ENCODE measurements at regions of chr22 and their contacts with region 1.

Region 1: GRCh38 chr22:21666786-21667185 is 974 bp downstream of the PPIL2 start:
- DNase-seq: no peak
- H3K4me3 ChIP-seq: peak overlapping the region; percentile 67 to 94
- H3K27ac ChIP-seq: peak overlapping the region; percentile 83 to 97
- H3K4me1 ChIP-seq: peaks cover 0 to 4% of the 10 kb centered on the region in 2 donors
- H3K27me3 ChIP-seq: no peaks in the 10 kb centered on the region
- CTCF ChIP-seq: no peak

Region 2: DNA sequence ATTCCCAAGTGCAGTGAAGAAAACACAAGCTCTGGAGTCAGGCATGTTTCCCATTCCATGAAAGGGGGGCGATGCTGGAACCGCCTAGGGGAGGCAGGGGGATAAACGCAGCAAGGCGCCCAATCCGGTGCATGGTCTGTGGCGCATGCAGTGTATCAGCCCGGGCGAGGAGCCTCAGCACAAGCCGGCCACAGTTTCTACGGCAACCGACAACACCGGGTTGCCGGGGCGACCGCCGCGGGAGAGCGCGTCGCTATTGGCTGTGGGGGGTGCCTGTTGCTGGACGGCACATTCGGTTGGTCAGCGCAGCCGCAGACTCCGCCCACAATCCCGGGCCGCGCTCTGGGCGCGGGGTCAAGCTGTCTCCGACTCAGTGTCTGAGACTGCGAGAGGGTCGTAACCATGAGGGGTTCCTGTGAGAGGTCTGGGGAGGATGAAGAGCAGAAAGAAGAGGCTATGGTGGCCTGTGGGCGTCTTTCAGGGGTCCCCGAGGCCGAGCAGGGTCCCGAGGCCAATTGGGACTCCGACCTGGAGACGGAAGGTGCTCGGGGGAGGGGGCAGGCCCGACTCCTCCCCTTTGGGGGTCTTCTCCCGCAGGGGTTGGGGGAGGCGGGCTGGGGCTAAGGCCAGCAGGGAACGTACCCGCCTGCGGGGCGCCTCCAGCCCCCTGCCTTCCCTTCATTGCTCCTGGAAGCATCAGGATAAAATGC is 621.0 kb before region 1 on chr22 and contains the start of gene LRRC74B:
- intact Hi-C with region 1: loop called (anchors 10 kb)
- DNase-seq: peak; percentile 62 to 89
- H3K4me3 ChIP-seq: peak within 1 kb of the TSS; percentile 37 to 41
- H3K27ac ChIP-seq: no peak within 1 kb of the TSS
- H3K4me1 ChIP-seq: peaks cover 7 to 15% of the 10 kb centered on the region in 2 donors
- H3K27me3 ChIP-seq: no peaks in the 10 kb centered on the region
- CTCF ChIP-seq: no peak
- total RNA-seq, gene LRRC74B: 2.6 TPM

Region 3: DNA sequence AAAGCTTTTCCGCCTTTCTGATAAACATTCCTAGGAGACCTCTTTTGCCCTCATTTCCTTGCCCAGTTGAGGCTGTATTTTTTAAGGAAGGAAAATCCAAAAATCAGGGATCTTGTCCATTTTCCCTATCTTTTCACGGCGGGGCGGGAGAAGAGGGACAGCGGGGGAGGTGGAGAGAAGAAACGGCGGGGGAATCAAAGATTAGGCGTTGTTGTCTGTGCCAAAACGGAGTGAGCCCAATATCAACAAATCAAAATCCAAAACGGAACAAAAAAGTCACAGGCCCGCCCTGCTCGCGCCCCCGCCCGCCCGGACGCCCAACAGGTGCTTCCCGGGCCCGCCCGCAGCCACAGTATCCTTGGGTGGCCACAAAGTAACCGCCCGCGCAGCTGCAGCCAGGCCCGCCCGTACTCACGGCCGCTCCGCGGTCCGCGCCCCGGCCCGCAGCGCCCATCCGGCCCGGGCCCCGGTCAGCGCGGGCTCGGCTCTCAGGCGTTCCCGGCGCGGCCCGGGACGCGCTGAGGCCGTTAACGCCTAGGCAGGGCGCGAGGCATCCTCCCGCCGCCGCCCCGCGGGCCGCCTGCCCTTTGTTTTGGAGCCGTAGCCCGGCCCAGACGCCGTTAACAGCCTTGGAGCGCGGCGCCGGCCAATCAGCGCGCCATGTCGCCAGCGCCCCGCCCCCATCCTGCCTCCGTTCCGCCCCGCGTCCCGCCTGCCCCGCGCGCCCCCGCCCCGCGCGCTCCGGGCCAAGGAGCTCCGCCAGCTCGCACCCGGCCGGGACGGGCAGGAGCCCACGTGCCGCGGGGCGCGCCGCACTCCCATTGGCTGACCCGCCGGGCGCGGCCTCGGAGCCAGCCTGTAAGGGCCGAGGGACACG is 68.7 kb after region 1 on chr22 and contains the start of gene YPEL1:
- intact Hi-C with region 1: loop called (anchors 5 kb)
- DNase-seq: peak; percentile 91 to 98
- H3K4me3 ChIP-seq: peak within 1 kb of the TSS; percentile 69 to 78
- H3K27ac ChIP-seq: peak within 1 kb of the TSS; percentile 58 to 72
- H3K4me1 ChIP-seq: peaks cover 0 to 7% of the 10 kb centered on the region in 2 donors
- H3K27me3 ChIP-seq: no peaks in the 10 kb centered on the region
- CTCF ChIP-seq: peak in 1 of 3 experiments; percentile 8
- total RNA-seq, gene YPEL1: 1.1 TPM